ENCODE measurements at regions of chr1 and their contacts with region 1.

Region 1: GRCh38 chr1:99872063-99872462 is 21.9 kb downstream of the AGL start:
- DNase-seq: no peak
- ATAC-seq: no peak
- H3K4me3 ChIP-seq: no peak overlapping the region
- H3K27ac ChIP-seq: no peak overlapping the region
- H3K4me1 ChIP-seq: no peaks in the 10 kb centered on the region
- H3K27me3 ChIP-seq: no peaks in the 10 kb centered on the region
- CTCF ChIP-seq: no peak

Region 2: GRCh38 chr1:99919220-99919619 is 47.2 kb after region 1 on chr1:
- intact Hi-C with region 1: loop called in 1 of 2 experiments (anchors 5 kb)
- DNase-seq: no peak
- ATAC-seq: peak in 1 of 4 donors; percentile 32
- H3K4me3 ChIP-seq: no peak overlapping the region
- H3K27ac ChIP-seq: no peak overlapping the region
- H3K4me1 ChIP-seq: no peaks in the 10 kb centered on the region
- H3K27me3 ChIP-seq: no peaks in the 10 kb centered on the region
- CTCF ChIP-seq: no peak

Region 3: GRCh38 chr1:100912019-100912418 is 1040.0 kb after region 1 on chr1:
- intact Hi-C with region 1: loop called in 1 of 2 experiments (anchors 10 kb)
- DNase-seq: no peak
- ATAC-seq: no peak
- H3K4me3 ChIP-seq: no peak overlapping the region
- H3K27ac ChIP-seq: no peak overlapping the region
- H3K4me1 ChIP-seq: no peaks in the 10 kb centered on the region
- H3K27me3 ChIP-seq: no peaks in the 10 kb centered on the region
- CTCF ChIP-seq: no peak